ENCODE measurements at regions of chr9 and their contacts with region 1.

Region 1: DNA sequence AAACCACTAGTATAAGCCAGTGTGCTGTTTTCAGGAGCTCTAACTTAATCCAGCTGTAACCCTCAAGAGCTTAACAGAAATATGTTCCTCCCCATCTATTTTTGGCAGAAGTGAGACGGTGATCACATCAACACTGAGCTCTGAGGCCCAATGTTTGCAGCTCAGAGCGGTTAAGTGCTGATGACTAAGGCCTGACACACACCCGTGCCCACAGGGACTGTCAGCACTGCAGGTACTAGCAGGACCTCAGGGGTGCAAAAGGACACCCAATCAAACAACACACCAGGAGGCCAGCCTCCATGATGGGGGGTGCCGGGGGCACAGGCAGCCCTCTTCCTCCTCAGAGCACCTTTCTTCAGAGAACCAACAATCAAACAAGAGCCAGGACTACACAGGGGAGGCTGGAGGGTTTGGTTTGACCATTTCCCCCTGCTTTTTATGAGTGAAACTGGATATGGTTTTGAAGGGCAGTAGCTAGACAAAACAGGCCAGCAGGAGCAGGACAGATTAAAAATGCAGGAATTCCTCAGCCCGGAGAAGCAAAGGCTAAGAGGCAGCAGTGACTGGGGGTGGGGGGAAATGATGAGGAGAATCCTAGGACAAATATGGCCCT is 61.3 kb downstream of the RAPGEF1 start:
- DNase-seq: peak in 1 of 9 donors; percentile 74
- ATAC-seq: peak; percentile 95
- H3K4me3 ChIP-seq: no peak overlapping the region
- H3K4me3 Mint-ChIP-seq: peak overlapping the region in 9 of 10 donors; percentile 10 to 76 (median 42)
- H3K27ac ChIP-seq: no peak overlapping the region
- H3K27ac Mint-ChIP-seq: peak overlapping the region; percentile 16 to 95 (median 60)
- H3K4me1 ChIP-seq: peaks cover 41 to 48% of the 10 kb centered on the region in 2 donors
- H3K4me1 Mint-ChIP-seq: peaks cover 53 to 91% (median 83%) of the 10 kb centered on the region in 7 donors
- H3K27me3 ChIP-seq: no peaks in the 10 kb centered on the region
- H3K27me3 Mint-ChIP-seq: no peaks in the 10 kb centered on the region

Region 2: GRCh38 chr9:131635285-131635684 is 43.3 kb before region 1 on chr9:
- CTCF ChIA-PET with region 1: interaction called, 3 read pairs
- POLR2A ChIA-PET with region 1: no interaction called
- intact Hi-C with region 1: loop called in 1 of 2 experiments (anchors 5 kb)
- DNase-seq: peak; percentile 34 to 76 (median 60)
- ATAC-seq: peak; percentile 98
- H3K4me3 ChIP-seq: no peak overlapping the region
- H3K4me3 Mint-ChIP-seq: peak overlapping the region in 3 of 10 donors; percentile 5 to 50 (median 11)
- H3K27ac ChIP-seq: peak overlapping the region; percentile 36
- H3K27ac Mint-ChIP-seq: peak overlapping the region; percentile 70 to 89 (median 85)
- H3K4me1 ChIP-seq: peaks cover 12 to 20% of the 10 kb centered on the region in 2 donors
- H3K4me1 Mint-ChIP-seq: peaks cover 15 to 51% (median 19%) of the 10 kb centered on the region in 7 donors
- H3K27me3 ChIP-seq: no peaks in the 10 kb centered on the region
- H3K27me3 Mint-ChIP-seq: no peaks in the 10 kb centered on the region

Region 3: DNA sequence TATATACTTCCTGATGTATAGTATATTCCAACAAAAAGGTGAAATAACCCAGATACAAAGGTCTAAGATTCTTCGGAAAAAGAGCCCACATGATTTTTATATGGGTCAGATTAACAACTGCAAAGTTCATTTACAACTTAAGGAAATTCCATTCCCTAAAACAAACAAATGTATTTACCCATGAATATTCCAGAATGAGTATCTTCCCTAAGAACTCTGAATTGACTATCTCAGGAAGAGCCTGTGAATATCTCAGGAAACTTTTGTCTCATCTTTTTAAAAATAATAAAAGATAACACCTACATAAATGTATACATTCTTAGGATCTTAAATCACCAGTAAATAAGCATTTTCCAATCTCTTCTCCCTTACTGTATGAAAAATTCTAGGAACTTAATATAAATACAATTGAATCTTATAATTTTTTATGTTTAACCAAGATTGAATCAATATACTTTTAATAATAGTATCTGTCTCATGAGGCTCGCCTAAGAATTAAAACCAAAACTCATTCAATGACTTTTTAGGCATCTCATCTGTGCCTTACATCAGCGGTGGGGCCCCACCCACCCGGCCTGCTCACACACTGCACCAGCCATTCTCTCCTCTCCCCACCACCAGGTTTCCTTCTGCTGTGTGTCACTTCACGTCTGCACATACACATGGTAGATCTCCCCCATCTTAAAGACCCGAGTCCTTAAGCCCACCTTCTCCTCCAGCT is 16.9 kb before region 1 on chr9:
- CTCF ChIA-PET with region 1: interaction called, 6 read pairs
- POLR2A ChIA-PET with region 1: interaction called, 4 read pairs
- intact Hi-C with region 1: loop called (anchors 2 kb)
- DNase-seq: peak in 5 of 9 donors; percentile 29 to 64 (median 38)
- ATAC-seq: peak; percentile 84
- H3K4me3 ChIP-seq: no peak overlapping the region
- H3K4me3 Mint-ChIP-seq: peak overlapping the region in 4 of 10 donors; percentile 15 to 61 (median 27)
- H3K27ac ChIP-seq: no peak overlapping the region
- H3K27ac Mint-ChIP-seq: peak overlapping the region; percentile 29 to 79 (median 63)
- H3K4me1 ChIP-seq: peaks cover 17 to 38% of the 10 kb centered on the region in 2 donors
- H3K4me1 Mint-ChIP-seq: peaks cover 44 to 92% (median 75%) of the 10 kb centered on the region in 7 donors
- H3K27me3 ChIP-seq: no peaks in the 10 kb centered on the region
- H3K27me3 Mint-ChIP-seq: no peaks in the 10 kb centered on the region

Region 4: DNA sequence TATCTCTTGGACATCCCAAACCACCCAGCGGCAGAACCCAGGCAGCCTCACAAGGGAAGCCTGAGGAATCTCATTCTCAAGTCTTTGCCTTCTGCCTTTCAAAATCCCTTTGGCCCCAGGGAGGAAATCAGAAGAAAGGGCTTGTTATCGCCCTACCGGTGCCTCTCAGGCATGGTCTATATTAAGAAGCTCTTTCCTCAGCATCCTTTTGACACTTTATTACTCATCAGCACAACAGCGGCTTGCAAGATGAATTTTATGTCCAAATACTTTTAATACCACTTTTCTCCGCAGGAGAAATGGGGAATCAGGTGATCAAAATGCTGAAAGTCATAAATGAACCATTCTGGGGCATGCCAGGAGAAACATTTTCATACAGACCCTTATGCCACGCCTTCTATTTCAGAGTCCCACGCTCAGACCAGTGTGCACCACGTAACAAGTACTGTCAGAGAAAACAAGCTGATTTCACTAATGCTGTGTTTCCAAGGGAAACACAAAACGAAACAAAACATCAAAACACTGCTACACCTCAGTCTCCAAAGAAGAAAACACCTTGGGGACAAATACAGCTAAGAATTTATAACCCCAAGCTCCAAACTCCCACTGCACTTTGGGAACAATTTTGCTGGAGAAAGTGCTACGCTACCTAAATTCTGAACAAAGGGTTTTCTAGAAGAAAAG is 31.3 kb after region 1 on chr9:
- CTCF ChIA-PET with region 1: no interaction called
- POLR2A ChIA-PET with region 1: interaction called, 3 read pairs
- intact Hi-C with region 1: loop called in 1 of 2 experiments (anchors 1 kb)
- DNase-seq: peak in 7 of 9 donors; percentile 15 to 52 (median 34)
- ATAC-seq: peak; percentile 88
- H3K4me3 ChIP-seq: no peak overlapping the region
- H3K4me3 Mint-ChIP-seq: peak overlapping the region in 9 of 10 donors; percentile 10 to 71 (median 38)
- H3K27ac ChIP-seq: peak overlapping the region; percentile 42
- H3K27ac Mint-ChIP-seq: peak overlapping the region; percentile 51 to 99 (median 81)
- H3K4me1 ChIP-seq: peaks cover 19 to 34% of the 10 kb centered on the region in 2 donors
- H3K4me1 Mint-ChIP-seq: peaks cover 47 to 82% (median 71%) of the 10 kb centered on the region in 7 donors
- H3K27me3 ChIP-seq: no peaks in the 10 kb centered on the region
- H3K27me3 Mint-ChIP-seq: no peaks in the 10 kb centered on the region

Region 5: DNA sequence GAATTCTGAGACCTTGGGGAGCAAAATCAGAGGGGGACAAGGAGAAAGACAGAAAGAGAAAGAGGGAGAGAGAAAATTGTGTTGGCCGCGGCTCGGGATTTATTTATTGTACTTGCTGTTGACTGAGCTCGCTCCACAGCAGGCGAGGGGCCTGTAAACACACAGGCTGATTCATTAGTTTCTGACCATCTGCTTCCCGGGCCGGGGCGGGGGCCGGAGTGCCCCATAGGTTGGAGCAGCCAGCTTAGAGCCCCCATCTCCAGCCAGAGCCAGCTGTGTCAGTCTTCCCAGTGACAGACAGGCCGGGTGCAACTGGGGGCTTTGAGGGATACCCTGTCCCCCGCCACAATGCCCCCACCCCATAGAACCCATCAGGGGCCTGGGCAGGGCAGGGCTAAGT is 514.1 kb after region 1 on chr9:
- CTCF ChIA-PET with region 1: no interaction called
- POLR2A ChIA-PET with region 1: no interaction called
- intact Hi-C with region 1: no loop called
- DNase-seq: no peak
- ATAC-seq: no peak
- H3K4me3 ChIP-seq: no peak overlapping the region
- H3K4me3 Mint-ChIP-seq: no peak overlapping the region
- H3K27ac ChIP-seq: no peak overlapping the region
- H3K27ac Mint-ChIP-seq: no peak overlapping the region
- H3K4me1 ChIP-seq: no peaks in the 10 kb centered on the region
- H3K4me1 Mint-ChIP-seq: peaks cover 0 to 3% (median 0%) of the 10 kb centered on the region in 7 donors
- H3K27me3 ChIP-seq: no peaks in the 10 kb centered on the region
- H3K27me3 Mint-ChIP-seq: peaks cover 0 to 9% (median 0%) of the 10 kb centered on the region in 5 donors

Region 6: GRCh38 chr9:133008824-133009223 is 1330.2 kb after region 1 on chr9:
- CTCF ChIA-PET with region 1: no interaction called
- POLR2A ChIA-PET with region 1: no interaction called
- intact Hi-C with region 1: no loop called
- DNase-seq: no peak
- ATAC-seq: peak; percentile 20
- H3K4me3 ChIP-seq: no peak overlapping the region
- H3K4me3 Mint-ChIP-seq: no peak overlapping the region
- H3K27ac ChIP-seq: no peak overlapping the region
- H3K27ac Mint-ChIP-seq: no peak overlapping the region
- H3K4me1 ChIP-seq: no peaks in the 10 kb centered on the region
- H3K4me1 Mint-ChIP-seq: peaks cover 0 to 2% (median 0%) of the 10 kb centered on the region in 7 donors
- H3K27me3 ChIP-seq: no peaks in the 10 kb centered on the region
- H3K27me3 Mint-ChIP-seq: peaks cover 20 to 46% (median 31%) of the 10 kb centered on the region in 5 donors